ENCODE measurements at regions of chr17 and their contacts with region 1.

Region 1: GRCh38 chr17:41665566-41666236 is 23.0 kb upstream of the EIF1 start:
- DNase-seq: peak; percentile 91
- ATAC-seq: peak; percentile 95

Region 2: DNA sequence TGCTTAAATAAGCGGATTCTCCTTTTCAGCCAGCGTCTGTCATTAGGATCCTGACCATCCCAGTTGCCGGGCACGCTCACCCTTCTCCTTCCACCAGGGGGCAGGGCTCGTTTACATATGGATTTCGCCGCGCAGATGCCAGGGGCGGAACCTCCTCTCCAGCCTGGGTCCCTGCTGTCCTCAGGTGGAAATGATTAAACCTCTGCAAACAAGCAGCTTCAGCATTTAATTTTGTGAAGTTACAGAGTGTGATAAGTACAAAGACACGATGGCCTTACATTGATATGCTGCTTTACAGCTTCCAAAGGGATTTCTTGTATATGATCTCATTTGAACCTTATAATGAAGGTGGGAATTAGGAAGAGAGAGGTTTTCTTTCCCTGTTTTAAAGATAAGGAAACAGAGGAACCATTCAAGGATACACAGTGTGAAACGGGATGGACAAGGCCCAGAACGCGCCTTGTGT is 862.1 kb before region 1 on chr17:
- intact Hi-C with region 1: loop called (anchors 5 kb)
- DNase-seq: peak; percentile 80
- ATAC-seq: peak; percentile 88 to 90

Region 3: GRCh38 chr17:40857535-40857934 is 808.2 kb before region 1 on chr17:
- intact Hi-C with region 1: loop called in 1 of 2 experiments (anchors 5 kb)
- DNase-seq: no peak
- ATAC-seq: peak in 1 of 2 donors; percentile 67

Region 4: GRCh38 chr17:40909351-40909750 is 756.4 kb before region 1 on chr17:
- intact Hi-C with region 1: loop called (anchors 5 to 10 kb)
- DNase-seq: peak; percentile 72
- ATAC-seq: peak; percentile 87 to 97

Measured in left cardiac atrium (tissue), 4 donors.